Posterior vena cava (tissue), 2 donors: ENCODE measurements at regions of chr12 and their contacts with region 1.

Region 1: DNA sequence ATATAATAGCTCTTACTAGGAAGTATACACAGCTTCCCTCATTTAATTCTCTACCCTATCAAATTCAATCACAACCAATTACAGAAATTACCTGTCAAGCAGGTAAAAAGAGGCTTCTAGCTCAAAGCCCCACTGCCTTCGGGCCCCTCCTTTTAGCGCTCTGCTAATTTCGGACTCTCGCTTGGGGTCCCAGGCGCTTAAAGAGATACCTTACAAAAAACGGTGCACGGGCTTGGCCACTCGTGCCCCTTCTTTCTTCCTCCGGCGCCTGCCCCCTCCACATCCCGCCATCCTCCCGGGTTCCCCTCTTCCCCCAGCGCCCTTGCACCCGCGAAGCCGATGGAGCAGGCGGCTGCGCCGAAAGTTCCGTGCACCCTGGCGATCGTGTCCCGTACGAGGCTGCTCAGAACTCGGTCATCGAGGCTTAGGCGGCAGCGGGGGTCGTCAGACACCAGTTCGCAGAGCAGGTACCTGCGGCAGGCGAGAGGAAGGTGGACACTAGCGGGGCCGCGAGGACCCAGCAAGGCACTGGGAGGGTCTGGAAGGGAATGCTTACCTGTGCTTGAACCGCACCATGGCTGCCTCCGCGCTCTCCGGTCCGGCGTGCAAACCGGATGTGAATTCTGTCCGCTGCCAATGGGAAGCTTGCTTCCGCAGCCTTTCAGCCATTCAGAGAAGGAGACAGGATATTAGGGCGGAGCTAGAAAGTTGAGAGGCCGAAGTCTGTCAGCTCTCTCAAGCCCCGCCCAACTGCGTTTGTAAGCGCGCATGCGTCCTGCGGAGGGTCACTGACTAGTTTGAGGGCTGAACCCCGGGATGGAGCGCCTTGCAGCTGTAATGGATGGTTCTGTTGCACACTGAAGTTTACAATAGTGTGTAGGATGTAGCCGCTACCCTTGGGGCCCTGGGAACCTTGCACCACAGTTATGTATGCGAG is at the start of gene POP5:
- DNase-seq: peak; percentile 98
- total RNA-seq, gene POP5: 19.6 to 28.9 TPM

Region 2: GRCh38 chr12:120538281-120539156 is 42.5 kb before region 1 on chr12:
- intact Hi-C with region 1: no loop called
- DNase-seq: peak; percentile 82

Region 3: DNA sequence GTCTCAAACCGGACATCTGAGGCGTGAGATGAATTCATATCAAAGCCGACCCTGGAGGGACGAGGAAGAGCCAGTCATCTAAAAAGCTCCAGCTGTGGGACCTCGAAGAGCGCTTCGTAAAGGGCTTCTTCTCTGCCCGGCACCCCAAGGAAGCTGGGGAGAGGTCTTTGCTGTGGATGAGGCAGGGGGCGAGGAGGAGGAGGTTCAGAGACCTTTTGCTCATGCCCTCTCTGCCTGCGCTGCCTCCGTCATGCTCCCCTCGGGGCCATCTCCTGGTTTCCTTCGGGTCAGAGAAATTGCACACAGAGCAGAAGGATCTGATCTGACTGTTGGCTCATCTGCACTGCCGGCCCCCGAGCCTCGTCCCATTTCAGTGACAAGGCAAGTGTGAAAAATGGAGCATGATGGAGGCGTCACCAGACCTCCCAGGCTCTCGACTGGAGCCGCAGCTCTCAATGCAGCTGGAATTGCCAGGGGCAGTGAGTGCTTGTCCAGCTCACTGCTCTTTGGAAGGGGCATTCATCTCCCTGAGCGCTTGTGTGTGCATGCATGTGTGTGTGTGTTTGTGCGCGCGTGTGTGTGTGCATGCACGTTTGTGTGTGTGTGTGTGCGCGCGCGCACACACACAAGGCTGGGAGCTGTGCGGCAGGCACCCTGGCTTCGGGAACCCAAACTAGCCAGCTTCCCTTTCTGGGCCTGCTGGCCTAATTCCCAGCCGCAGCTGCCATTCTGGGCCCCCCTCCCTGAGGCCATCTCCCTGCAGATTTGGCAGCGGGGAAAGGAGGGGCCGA is 68.6 kb after region 1 on chr12:
- intact Hi-C with region 1: loop called in 1 of 2 experiments (anchors 5 kb)
- DNase-seq: no peak

Region 4: GRCh38 chr12:120677765-120678473 is 96.9 kb after region 1 on chr12:
- intact Hi-C with region 1: no loop called
- DNase-seq: no peak

Region 5: GRCh38 chr12:120710031-120710804 is 129.2 kb after region 1 on chr12 and contains the start of gene UNC119B:
- intact Hi-C with region 1: loop called (anchors 5 kb)
- DNase-seq: peak; percentile 93
- total RNA-seq, gene UNC119B: 20.6 to 21.3 TPM

Region 6: GRCh38 chr12:120971299-120972179 is 390.5 kb after region 1 on chr12:
- intact Hi-C with region 1: loop called in 1 of 2 experiments (anchors 5 kb)
- DNase-seq: no peak

Region 7: DNA sequence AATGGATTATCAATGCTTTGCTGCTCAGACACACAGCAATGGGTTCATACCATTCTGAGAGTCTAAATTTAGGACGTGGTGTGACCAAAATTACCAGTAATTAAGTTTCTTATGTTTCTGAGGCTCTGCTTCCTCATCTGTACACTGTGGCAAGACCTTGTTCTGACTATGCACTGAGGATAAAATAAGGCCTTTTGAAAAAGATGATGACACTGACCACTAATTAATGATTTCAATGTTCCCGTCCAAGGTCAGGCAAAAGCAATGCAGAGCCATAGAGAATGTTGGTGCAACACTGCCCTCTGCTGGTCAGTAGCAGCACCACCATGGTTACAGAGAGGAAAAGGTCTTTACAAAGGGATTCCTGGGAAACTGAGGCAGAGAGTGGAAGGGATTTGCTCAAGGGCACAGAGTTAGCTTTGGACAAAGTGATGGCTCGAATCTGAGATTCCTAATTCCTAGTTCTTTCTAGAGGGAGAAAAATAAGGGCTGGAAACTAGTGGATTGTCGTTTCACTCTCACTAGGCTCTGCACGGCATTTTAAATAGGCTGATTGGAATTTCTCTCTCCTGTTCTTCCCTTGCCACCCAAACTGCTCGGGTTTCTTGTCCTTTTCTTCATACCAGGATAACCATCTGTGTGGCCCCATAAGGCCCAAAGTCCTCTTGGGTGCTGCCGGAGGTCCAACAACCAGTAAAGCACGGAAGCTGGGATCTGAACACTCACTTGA is 529.3 kb after region 1 on chr12:
- intact Hi-C with region 1: loop called in 1 of 2 experiments (anchors 5 kb)
- DNase-seq: no peak